AG04450 (cell line): ENCODE measurements at regions of chr12 and their contacts with region 1.

Region 1: DNA sequence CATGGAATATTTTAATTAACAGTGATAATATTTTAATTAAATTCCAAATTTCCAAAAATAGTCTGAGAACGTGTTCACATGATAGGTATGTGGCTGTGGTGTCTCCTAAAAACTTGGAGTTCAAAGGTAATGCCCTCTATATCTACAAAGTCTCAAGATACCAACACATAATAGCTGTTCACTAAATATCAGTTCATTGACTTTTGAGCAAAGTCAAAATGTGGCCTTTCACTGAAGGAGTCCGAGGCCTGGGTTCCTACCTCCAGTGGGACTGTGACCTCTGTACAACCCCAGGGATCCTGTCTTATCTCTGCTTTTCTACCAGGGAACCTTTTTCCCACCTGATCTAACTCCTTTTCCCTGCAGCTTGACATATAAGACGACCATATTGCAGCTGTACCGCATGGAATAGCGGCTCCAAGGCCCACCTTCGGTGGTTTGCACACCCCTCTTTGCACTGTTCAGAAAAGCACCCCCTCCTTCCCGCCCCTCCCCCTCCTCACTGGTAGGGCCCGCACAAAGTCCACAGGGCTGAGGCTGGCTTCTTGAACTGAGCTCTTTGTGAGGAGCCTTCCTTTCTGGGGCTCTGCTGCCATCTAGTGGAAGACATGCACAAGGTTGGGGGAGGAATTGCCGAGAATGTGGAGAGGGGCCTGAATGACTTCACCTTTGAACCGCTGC is 3.1 kb downstream of the CCND2 start:
- DNase-seq: peak; percentile 69
- H3K4me3 ChIP-seq: no peak overlapping the region
- H3K27ac ChIP-seq: no peak overlapping the region
- H3K27me3 ChIP-seq: peaks cover 65% of the 10 kb centered on the region
- CTCF ChIP-seq: peak; percentile 97

Region 2: DNA sequence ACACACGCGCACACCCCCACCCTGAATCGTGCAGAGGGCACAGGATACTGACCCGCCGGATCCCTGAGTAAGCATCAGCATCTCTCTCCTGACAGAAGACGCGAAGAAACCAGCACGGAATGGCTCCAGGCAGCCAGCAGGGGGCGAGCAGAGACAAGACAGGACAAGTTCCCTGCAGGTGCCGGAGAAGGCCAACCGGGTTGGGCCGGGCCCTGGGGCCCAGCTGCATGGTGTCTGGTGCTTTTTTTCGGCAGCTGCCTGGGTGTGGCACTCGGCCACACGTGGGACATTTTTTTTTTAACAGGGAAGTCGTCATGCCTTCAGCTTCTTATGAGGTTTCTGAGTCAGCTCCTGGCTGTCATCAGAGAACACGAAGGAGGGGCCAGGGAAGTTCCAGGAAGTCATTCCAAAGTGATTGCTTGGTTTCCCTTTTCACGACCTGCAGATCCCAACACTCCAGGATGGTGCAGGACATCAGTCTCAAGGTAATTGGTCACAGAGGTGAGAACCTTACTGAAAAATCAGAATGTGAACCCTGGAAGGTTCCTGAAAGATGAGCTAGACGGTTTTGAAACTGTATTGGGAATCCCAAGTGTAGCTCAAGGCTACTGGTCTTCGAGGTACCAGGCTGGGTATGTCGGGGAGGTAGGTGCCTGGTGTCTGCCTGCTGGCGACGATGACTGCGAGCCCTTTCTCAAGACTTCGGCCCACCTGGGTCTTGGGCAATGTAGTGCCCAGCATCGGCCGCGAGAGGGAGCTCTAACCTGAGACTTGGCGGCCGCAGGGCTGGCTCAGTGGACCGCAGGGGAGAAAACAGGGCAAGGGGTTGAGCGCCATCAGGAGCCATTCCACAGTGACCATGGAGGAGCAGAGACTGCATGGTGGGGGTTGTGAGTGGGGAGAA is 976.5 kb before region 1 on chr12:
- CTCF ChIA-PET with region 1: interaction called, 28 read pairs
- POLR2A ChIA-PET with region 1: no interaction called
- DNase-seq: peak; percentile 76
- H3K4me3 ChIP-seq: peak overlapping the region; percentile 46
- H3K27ac ChIP-seq: peak overlapping the region; percentile 93
- H3K27me3 ChIP-seq: no peaks in the 10 kb centered on the region
- CTCF ChIP-seq: peak; percentile 98

Region 3: GRCh38 chr12:3990501-3991280 is 286.0 kb before region 1 on chr12:
- CTCF ChIA-PET with region 1: interaction called, 46 read pairs
- POLR2A ChIA-PET with region 1: no interaction called
- DNase-seq: no peak
- H3K4me3 ChIP-seq: no peak overlapping the region
- H3K27ac ChIP-seq: no peak overlapping the region
- H3K27me3 ChIP-seq: peaks cover 14% of the 10 kb centered on the region
- CTCF ChIP-seq: no peak

Region 4: DNA sequence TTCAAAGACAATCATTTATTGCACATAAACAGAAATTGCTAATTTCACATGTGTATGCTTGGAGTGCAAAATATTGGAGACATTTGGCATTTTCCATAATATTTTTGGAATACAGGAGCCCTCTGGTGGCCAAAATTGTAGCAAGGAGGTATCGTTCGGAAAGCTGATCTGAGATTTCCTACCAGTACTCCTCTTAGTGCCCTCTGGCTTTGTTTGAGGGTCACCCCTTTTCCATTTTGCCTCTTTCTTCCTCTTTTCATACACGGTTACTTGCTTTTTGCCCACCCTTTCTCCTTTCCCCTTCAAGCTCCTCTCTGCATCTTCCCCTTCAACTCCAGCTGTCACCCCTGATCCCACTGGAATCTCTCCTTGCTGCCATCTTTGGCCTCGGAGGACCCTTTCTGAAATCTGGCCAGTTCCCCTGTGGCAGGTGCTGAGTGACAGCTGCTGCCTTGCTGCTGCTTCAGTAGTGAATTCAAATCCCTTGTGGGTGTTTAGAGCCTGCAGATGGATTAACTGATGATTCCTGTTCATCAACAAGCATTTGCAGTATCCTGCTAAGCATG is 238.8 kb before region 1 on chr12:
- CTCF ChIA-PET with region 1: interaction called, 89 read pairs
- POLR2A ChIA-PET with region 1: interaction called, 3 read pairs
- DNase-seq: no peak
- H3K4me3 ChIP-seq: no peak overlapping the region
- H3K27ac ChIP-seq: no peak overlapping the region
- H3K27me3 ChIP-seq: peaks cover 15% of the 10 kb centered on the region
- CTCF ChIP-seq: peak; percentile 76

Region 5: GRCh38 chr12:4118017-4118510 is 158.6 kb before region 1 on chr12:
- CTCF ChIA-PET with region 1: interaction called, 41 read pairs
- POLR2A ChIA-PET with region 1: no interaction called
- DNase-seq: peak; percentile 27
- H3K4me3 ChIP-seq: no peak overlapping the region
- H3K27ac ChIP-seq: no peak overlapping the region
- H3K27me3 ChIP-seq: peaks cover 4% of the 10 kb centered on the region
- CTCF ChIP-seq: no peak

Region 6: GRCh38 chr12:4261655-4262054 is 15.0 kb before region 1 on chr12:
- CTCF ChIA-PET with region 1: interaction called, 44 read pairs
- POLR2A ChIA-PET with region 1: no interaction called
- DNase-seq: no peak
- H3K4me3 ChIP-seq: no peak overlapping the region
- H3K27ac ChIP-seq: no peak overlapping the region
- H3K27me3 ChIP-seq: peaks cover 26% of the 10 kb centered on the region
- CTCF ChIP-seq: no peak

Region 7: GRCh38 chr12:4307593-4308333 is 31.1 kb after region 1 on chr12:
- CTCF ChIA-PET with region 1: interaction called, 19 read pairs
- POLR2A ChIA-PET with region 1: no interaction called
- DNase-seq: peak; percentile 55
- H3K4me3 ChIP-seq: peak overlapping the region; percentile 17; the same call in 1 of the 2 replicates
- H3K27ac ChIP-seq: no peak overlapping the region
- H3K27me3 ChIP-seq: peaks cover 14% of the 10 kb centered on the region
- CTCF ChIP-seq: peak; percentile 79

Region 8: GRCh38 chr12:4375449-4375848 is 98.8 kb after region 1 on chr12:
- CTCF ChIA-PET with region 1: no interaction called
- POLR2A ChIA-PET with region 1: no interaction called
- DNase-seq: no peak
- H3K4me3 ChIP-seq: no peak overlapping the region
- H3K27ac ChIP-seq: no peak overlapping the region
- H3K27me3 ChIP-seq: peaks cover 2% of the 10 kb centered on the region
- CTCF ChIP-seq: no peak

Region 9: GRCh38 chr12:4402996-4403395 is 126.3 kb after region 1 on chr12:
- CTCF ChIA-PET with region 1: no interaction called
- POLR2A ChIA-PET with region 1: no interaction called
- DNase-seq: no peak
- H3K4me3 ChIP-seq: no peak overlapping the region
- H3K27ac ChIP-seq: no peak overlapping the region
- H3K27me3 ChIP-seq: no peaks in the 10 kb centered on the region
- CTCF ChIP-seq: no peak